ENCODE measurements at regions of chr1 and their contacts with region 1.

Region 1: DNA sequence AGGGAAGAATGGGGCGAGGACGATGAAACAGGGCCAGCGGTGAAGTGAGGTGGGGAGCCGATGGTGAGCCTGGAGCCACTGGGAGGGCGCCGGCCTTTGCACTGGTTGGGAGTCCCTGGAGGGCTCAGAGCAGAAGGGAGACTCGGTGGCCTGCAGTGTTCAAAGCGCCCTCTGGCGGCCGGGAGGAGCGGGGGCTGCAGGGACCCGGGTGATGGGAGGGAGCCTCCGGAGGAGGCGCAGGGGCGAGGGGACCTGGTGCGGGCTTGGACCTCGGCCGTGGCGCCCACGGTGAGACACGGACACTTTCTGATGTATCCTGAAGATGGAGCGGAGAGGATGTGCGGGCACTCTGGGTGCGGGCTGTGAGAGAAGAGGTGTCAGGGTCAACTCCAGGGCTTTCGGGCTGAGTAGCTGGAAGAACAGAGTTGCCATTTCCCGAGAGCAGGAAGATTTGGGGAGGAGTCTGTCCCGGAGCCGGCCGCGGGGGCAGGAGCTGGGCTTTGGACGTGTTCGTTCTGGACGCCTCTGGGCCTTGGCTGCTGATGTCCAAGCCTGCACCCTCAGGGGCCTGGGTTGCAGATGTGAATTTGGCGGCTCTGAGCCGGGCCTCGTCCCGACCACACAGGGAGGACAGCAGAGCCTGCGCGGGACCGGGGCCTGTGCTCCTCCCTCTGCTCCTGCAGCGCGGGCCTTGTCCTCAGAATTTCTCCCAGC is 29.7 kb downstream of the HEYL start:
- DNase-seq: peak; percentile 81
- ATAC-seq: peak; percentile 91
- H3K4me3 Mint-ChIP-seq: no peak overlapping the region
- H3K27ac Mint-ChIP-seq: no peak overlapping the region
- H3K4me1 Mint-ChIP-seq: no peaks in the 10 kb centered on the region
- H3K27me3 Mint-ChIP-seq: peaks cover 9% of the 10 kb centered on the region
- CTCF ChIP-seq: peak; percentile 78

Region 2: DNA sequence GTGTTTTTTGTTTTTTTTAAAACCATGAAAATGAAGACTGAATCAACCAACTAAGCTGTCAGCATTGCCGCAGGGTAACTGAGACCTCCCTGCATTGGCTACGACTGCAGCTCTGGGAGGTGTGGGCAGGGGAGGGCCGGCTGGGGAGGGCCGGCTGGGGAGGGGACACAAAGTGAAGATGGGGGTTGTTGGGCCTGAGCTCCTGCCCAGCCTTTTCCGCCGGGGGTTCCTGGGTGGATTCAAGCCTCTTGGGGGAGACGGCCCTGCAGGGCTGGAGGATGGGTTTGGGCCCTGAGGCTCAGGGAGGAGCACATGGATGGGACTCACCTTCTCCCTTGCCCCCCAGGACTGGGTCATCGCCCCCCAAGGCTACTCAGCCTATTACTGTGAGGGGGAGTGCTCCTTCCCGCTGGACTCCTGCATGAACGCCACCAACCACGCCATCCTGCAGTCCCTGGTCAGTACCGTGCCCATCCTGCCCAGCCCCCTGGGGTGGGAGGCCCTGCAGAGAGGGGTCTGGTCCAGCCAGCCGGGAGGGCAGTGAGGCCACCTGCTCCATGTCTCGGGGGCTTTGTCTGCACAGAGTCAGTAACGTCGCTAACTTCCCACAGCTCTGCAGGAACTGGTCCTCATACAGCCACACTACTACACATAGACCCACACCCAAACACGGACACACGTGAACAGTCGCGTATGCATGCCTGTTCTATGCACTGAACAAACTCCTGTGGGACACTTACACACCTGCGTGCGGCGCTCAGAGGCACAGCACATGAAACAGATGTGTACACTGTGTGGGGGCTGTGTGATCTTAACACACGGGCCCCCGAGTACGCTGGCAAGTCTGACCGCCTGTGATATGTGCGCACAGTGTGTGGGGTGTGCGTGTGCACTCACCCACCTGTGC is 86.9 kb before region 1 on chr1:
- CTCF ChIA-PET with region 1: no interaction called
- POLR2A ChIA-PET with region 1: no interaction called
- intact Hi-C with region 1: no loop called
- DNase-seq: no peak
- ATAC-seq: no peak
- H3K4me3 Mint-ChIP-seq: no peak overlapping the region
- H3K27ac Mint-ChIP-seq: no peak overlapping the region
- H3K4me1 Mint-ChIP-seq: peaks cover 8% of the 10 kb centered on the region
- H3K27me3 Mint-ChIP-seq: no peaks in the 10 kb centered on the region
- CTCF ChIP-seq: no peak

Region 3: GRCh38 chr1:39632682-39633417 is 23.1 kb after region 1 on chr1:
- CTCF ChIA-PET with region 1: interaction called, 12 read pairs
- POLR2A ChIA-PET with region 1: no interaction called
- intact Hi-C with region 1: no loop called
- DNase-seq: no peak
- ATAC-seq: no peak
- H3K4me3 Mint-ChIP-seq: no peak overlapping the region
- H3K27ac Mint-ChIP-seq: no peak overlapping the region
- H3K4me1 Mint-ChIP-seq: peaks cover 5% of the 10 kb centered on the region
- H3K27me3 Mint-ChIP-seq: peaks cover 28% of the 10 kb centered on the region
- CTCF ChIP-seq: no peak

Region 4: DNA sequence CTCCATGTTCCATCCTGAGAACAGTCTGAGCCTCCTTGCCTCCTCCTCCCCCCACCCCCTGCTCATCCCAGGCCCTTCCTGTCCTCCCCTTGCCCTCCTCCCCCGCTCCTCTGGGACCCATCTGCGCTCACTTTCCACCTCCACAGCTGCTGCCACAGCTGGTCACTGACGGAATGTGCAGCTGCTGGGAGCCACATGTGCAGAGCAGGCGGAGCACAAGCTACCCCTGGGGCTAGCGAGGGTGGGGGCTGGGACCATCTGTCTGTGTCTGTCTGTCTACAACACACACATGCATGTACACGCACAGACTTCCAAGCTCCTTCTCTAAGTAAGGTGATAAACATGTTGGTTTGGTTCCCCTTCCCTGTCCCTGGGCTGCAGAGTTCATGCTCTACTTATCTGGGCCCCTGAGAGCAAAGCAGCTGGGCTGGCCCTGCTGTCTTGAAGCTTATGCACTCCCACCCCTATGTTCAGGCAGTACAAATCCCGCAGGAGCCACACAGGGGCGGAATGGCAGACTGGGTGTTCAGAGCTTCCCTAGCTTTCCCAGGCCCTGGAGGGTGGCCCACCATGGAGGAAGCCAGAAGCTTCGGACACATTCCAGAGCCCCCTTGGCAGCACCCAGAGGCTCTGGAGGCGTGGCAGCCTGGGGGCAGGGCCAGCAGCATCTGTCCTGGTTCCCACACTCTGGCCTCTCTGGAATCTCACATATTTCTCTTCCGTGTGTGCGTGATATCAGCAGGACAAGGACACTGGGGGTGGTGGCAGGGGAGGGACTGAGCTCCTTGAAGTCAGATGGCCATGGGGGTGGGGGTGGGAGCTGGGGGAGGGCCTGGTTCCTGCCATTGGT is 36.7 kb after region 1 on chr1:
- CTCF ChIA-PET with region 1: interaction called, 329 read pairs
- POLR2A ChIA-PET with region 1: no interaction called
- intact Hi-C with region 1: no loop called
- DNase-seq: no peak
- ATAC-seq: no peak
- H3K4me3 Mint-ChIP-seq: no peak overlapping the region
- H3K27ac Mint-ChIP-seq: no peak overlapping the region
- H3K4me1 Mint-ChIP-seq: no peaks in the 10 kb centered on the region
- H3K27me3 Mint-ChIP-seq: peaks cover 3% of the 10 kb centered on the region
- CTCF ChIP-seq: no peak

Region 5: GRCh38 chr1:39672551-39672947 is 62.8 kb after region 1 on chr1:
- CTCF ChIA-PET with region 1: interaction called, 36 read pairs
- POLR2A ChIA-PET with region 1: no interaction called
- intact Hi-C with region 1: no loop called
- DNase-seq: peak; percentile 53
- ATAC-seq: peak; percentile 43
- H3K4me3 Mint-ChIP-seq: peak overlapping the region; percentile 58
- H3K27ac Mint-ChIP-seq: no peak overlapping the region
- H3K4me1 Mint-ChIP-seq: peaks cover 13% of the 10 kb centered on the region
- H3K27me3 Mint-ChIP-seq: peaks cover 36% of the 10 kb centered on the region
- CTCF ChIP-seq: peak; percentile 66

Region 6: GRCh38 chr1:39720094-39720999 is 110.6 kb after region 1 on chr1:
- CTCF ChIA-PET with region 1: interaction called, 58 read pairs
- POLR2A ChIA-PET with region 1: no interaction called
- intact Hi-C with region 1: loop called (anchors 5 kb)
- DNase-seq: no peak
- ATAC-seq: peak; percentile 56
- H3K4me3 Mint-ChIP-seq: no peak overlapping the region
- H3K27ac Mint-ChIP-seq: no peak overlapping the region
- H3K4me1 Mint-ChIP-seq: no peaks in the 10 kb centered on the region
- H3K27me3 Mint-ChIP-seq: peaks cover 41% of the 10 kb centered on the region
- CTCF ChIP-seq: peak; percentile 61

Region 7: GRCh38 chr1:39738622-39739366 is 129.0 kb after region 1 on chr1 and contains the start of gene PPIE:
- CTCF ChIA-PET with region 1: interaction called, 10 read pairs
- POLR2A ChIA-PET with region 1: no interaction called
- intact Hi-C with region 1: no loop called
- DNase-seq: peak; percentile 99
- ATAC-seq: peak; percentile 99
- H3K4me3 Mint-ChIP-seq: peak within 1 kb of the TSS; percentile 93
- H3K27ac Mint-ChIP-seq: peak within 1 kb of the TSS; percentile 92
- H3K4me1 Mint-ChIP-seq: peaks cover 43% of the 10 kb centered on the region
- H3K27me3 Mint-ChIP-seq: peaks cover 8% of the 10 kb centered on the region
- CTCF ChIP-seq: no peak
- total RNA-seq, gene PPIE: 71.7 to 74.7 TPM

Measured in activated CD8-positive, alpha-beta T cell treated with anti-CD3 and anti-CD28 coated beads for 36 hours (primary cell).